Activated naive CD4-positive, alpha-beta T cell treated with anti-CD3 and anti-CD28 coated beads for 36 hours (primary cell): ENCODE measurements at regions of chr2 and their contacts with region 1.

Region 1: GRCh38 chr2:47767880-47768609 is 14.9 kb upstream of the MSH6 start:
- DNase-seq: peak; percentile 74
- H3K4me3 Mint-ChIP-seq: peak overlapping the region; percentile 15
- H3K27ac Mint-ChIP-seq: no peak overlapping the region
- H3K4me1 Mint-ChIP-seq: peaks cover 2% of the 10 kb centered on the region
- H3K27me3 Mint-ChIP-seq: no peaks in the 10 kb centered on the region

Region 2: GRCh38 chr2:47336259-47337238 is 431.5 kb before region 1 on chr2:
- CTCF ChIA-PET with region 1: interaction called, 31 read pairs
- intact Hi-C with region 1: loop called (anchors 1 kb)
- DNase-seq: no peak
- H3K4me3 Mint-ChIP-seq: no peak overlapping the region
- H3K27ac Mint-ChIP-seq: no peak overlapping the region
- H3K4me1 Mint-ChIP-seq: no peaks in the 10 kb centered on the region
- H3K27me3 Mint-ChIP-seq: peaks cover 3% of the 10 kb centered on the region

Region 3: DNA sequence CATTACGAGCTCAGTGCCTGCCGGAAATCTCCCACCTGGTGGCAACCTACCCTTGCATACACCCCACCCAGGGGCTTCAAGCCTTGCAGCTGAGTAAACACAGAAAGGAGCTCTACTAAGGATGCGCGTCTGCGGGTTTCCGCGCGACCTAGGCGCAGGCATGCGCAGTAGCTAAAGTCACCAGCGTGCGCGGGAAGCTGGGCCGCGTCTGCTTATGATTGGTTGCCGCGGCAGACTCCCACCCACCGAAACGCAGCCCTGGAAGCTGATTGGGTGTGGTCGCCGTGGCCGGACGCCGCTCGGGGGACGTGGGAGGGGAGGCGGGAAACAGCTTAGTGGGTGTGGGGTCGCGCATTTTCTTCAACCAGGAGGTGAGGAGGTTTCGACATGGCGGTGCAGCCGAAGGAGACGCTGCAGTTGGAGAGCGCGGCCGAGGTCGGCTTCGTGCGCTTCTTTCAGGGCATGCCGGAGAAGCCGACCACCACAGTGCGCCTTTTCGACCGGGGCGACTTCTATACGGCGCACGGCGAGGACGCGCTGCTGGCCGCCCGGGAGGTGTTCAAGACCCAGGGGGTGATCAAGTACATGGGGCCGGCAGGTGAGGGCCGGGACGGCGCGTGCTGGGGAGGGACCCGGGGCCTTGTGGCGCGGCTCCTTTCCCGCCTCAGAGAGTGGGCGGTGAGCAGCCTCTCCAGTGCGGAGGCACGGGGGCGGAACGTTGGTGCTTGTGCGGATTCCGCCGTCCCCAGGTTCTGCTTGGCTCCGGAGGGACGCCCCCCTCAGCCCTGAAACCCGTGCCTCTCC is 365.0 kb before region 1 on chr2 and contains the start of gene MSH2:
- CTCF ChIA-PET with region 1: no interaction called
- intact Hi-C with region 1: loop called (anchors 5 kb)
- DNase-seq: peak; percentile 95
- H3K4me3 Mint-ChIP-seq: peak within 1 kb of the TSS; percentile 90
- H3K27ac Mint-ChIP-seq: peak within 1 kb of the TSS; percentile 97
- H3K4me1 Mint-ChIP-seq: peaks cover 40% of the 10 kb centered on the region
- H3K27me3 Mint-ChIP-seq: no peaks in the 10 kb centered on the region
- total RNA-seq, gene MSH2: 42.7 to 43.3 TPM

Region 4: DNA sequence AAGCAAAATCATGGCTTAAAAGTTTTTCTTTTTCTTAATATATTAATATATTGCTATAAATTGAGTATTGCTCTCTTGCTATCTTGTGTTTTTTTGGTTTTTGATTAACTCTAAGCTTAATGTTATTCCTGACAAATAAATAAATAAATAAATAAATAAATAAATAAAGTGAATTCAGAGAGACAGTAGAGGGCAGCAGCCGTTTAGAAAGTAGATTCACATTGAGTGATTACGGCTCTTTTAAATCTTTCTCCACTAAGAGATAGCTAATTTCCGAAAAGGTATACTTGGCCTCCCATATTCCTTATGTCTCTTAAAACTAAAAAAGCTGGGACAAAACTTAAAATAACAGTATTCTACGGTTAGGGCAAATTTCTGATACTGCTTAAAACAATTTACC is 330.8 kb before region 1 on chr2:
- CTCF ChIA-PET with region 1: interaction called, 7 read pairs
- intact Hi-C with region 1: loop called (anchors 2 kb)
- DNase-seq: no peak
- H3K4me3 Mint-ChIP-seq: no peak overlapping the region
- H3K27ac Mint-ChIP-seq: no peak overlapping the region
- H3K4me1 Mint-ChIP-seq: no peaks in the 10 kb centered on the region
- H3K27me3 Mint-ChIP-seq: no peaks in the 10 kb centered on the region

Region 5: GRCh38 chr2:47520825-47521665 is 247.0 kb before region 1 on chr2:
- CTCF ChIA-PET with region 1: interaction called, 15 read pairs
- intact Hi-C with region 1: loop called (anchors 1 kb)
- DNase-seq: peak; percentile 83
- H3K4me3 Mint-ChIP-seq: peak overlapping the region; percentile 82
- H3K27ac Mint-ChIP-seq: peak overlapping the region; percentile 72
- H3K4me1 Mint-ChIP-seq: peaks cover 10% of the 10 kb centered on the region
- H3K27me3 Mint-ChIP-seq: no peaks in the 10 kb centered on the region

Region 6: GRCh38 chr2:47682231-47682749 is 85.8 kb before region 1 on chr2:
- CTCF ChIA-PET with region 1: no interaction called
- intact Hi-C with region 1: no loop called
- DNase-seq: no peak
- H3K4me3 Mint-ChIP-seq: no peak overlapping the region
- H3K27ac Mint-ChIP-seq: no peak overlapping the region
- H3K4me1 Mint-ChIP-seq: no peaks in the 10 kb centered on the region
- H3K27me3 Mint-ChIP-seq: no peaks in the 10 kb centered on the region

Region 7: DNA sequence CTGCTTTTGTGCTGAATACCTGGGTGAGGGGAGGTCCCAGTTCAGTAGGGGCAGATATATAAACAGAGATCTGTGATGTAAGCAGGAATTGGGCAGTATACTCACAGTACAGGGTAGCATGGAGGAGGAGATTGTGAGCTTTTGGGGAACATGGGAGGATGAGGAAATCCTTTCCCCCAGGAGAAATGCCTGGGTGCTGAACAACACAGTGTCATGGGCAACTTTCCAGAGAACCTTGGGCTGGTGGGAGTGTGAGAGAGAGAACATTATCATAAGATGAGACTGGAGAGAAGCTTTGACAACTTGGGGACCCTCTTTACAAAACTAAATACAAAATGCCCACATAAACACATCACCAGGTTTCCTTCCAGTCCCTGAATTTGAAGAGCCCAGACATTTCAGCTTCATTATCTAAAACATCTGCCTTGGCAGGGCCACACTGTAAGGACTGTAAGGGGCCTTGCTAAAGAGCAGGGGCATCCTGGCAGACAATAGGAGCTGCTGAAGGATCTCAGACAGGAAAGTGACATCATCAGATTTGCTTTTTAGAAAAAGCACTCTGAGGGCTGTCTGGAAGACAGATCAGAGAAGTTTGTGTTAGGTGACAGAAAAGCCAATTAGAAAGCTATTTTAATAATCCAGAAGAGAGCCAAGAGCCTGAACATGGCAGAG is 441.3 kb after region 1 on chr2:
- CTCF ChIA-PET with region 1: no interaction called
- intact Hi-C with region 1: no loop called
- DNase-seq: no peak
- H3K4me3 Mint-ChIP-seq: no peak overlapping the region
- H3K27ac Mint-ChIP-seq: no peak overlapping the region
- H3K4me1 Mint-ChIP-seq: peaks cover 6% of the 10 kb centered on the region
- H3K27me3 Mint-ChIP-seq: no peaks in the 10 kb centered on the region